CD4-positive, alpha-beta memory T cell (primary cell): ENCODE measurements at regions of chr4 and their contacts with region 1.

Region 1: GRCh38 chr4:1856042-1856788 is at the start of gene LETM1:
- DNase-seq: peak; percentile 90 to 92 (median 91)
- H3K4me3 ChIP-seq: peak within 1 kb of the TSS; percentile 47 to 89
- H3K4me3 Mint-ChIP-seq: peak within 1 kb of the TSS; percentile 81 to 90 (median 85)
- H3K27ac ChIP-seq: peak within 1 kb of the TSS; percentile 59
- H3K27ac Mint-ChIP-seq: peak within 1 kb of the TSS; percentile 25 to 84 (median 76)
- H3K4me1 ChIP-seq: peaks cover 44% of the 10 kb centered on the region
- H3K4me1 Mint-ChIP-seq: peaks cover 9 to 42% (median 31%) of the 10 kb centered on the region in 4 donors
- H3K27me3 ChIP-seq: no peaks in the 10 kb centered on the region
- H3K27me3 Mint-ChIP-seq: no peaks in the 10 kb centered on the region
- total RNA-seq, gene LETM1: 38.8 to 42.8 TPM

Region 2: GRCh38 chr4:1512738-1513660 is 343.2 kb before region 1 on chr4:
- CTCF ChIA-PET with region 1: no interaction called
- POLR2A ChIA-PET with region 1: no interaction called
- intact Hi-C with region 1: no loop called
- DNase-seq: peak in 4 of 5 donors; percentile 39 to 63 (median 49)
- H3K4me3 ChIP-seq: no peak overlapping the region
- H3K4me3 Mint-ChIP-seq: peak overlapping the region in 4 of 8 donors; percentile 27 to 63 (median 42)
- H3K27ac ChIP-seq: no peak overlapping the region
- H3K27ac Mint-ChIP-seq: no peak overlapping the region
- H3K4me1 ChIP-seq: peaks cover 3% of the 10 kb centered on the region
- H3K4me1 Mint-ChIP-seq: no peaks in the 10 kb centered on the region
- H3K27me3 ChIP-seq: peaks cover 5% of the 10 kb centered on the region
- H3K27me3 Mint-ChIP-seq: peaks cover 3 to 8% of the 10 kb centered on the region in 2 donors

Region 3: DNA sequence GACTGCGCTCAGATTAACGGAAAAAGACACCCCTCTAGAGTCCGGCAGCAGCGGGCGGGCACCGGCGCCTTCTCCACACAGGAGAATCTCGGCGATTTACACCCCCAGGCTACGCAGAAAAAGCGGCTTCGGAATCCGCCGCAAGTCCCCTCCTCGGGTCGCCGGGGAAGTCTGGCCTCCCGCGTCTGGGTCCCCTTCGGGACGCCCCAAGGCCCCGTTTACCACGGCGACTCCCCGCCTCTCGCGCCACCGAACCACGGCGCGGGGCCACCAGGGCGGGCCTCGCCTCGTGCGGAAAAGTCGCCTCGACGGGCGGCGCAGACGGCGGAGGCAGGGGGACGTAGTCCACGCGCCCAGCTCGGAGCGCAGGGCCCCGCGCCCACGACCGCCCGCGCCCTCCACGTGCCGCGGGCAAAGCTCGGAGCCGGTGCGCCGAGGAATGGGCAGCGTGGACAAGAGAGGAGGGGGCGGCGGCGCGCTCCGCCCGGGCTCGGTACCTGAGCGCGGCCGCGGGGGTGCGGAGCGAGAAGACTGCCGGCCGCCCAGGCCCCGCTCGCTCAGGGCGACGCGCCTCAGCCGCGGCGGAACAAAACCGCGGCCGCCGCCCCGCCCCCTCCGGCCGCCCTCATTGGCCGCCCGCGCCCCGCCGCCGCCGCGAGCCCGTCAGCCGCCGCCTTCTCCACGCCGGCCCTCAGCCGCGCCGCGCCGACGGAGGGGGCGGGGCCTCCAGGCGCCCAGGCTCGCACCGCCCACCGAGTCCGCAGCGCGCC is 172.3 kb before region 1 on chr4 and contains the start of gene FAM53A:
- CTCF ChIA-PET with region 1: no interaction called
- POLR2A ChIA-PET with region 1: no interaction called
- intact Hi-C with region 1: loop called (anchors 1 kb)
- DNase-seq: peak; percentile 57 to 92 (median 90)
- H3K4me3 ChIP-seq: peak within 1 kb of the TSS; percentile 52 to 58
- H3K4me3 Mint-ChIP-seq: peak within 1 kb of the TSS; percentile 88 to 93 (median 91)
- H3K27ac ChIP-seq: peak within 1 kb of the TSS; percentile 52
- H3K27ac Mint-ChIP-seq: peak within 1 kb of the TSS; percentile 89 to 96 (median 95)
- H3K4me1 ChIP-seq: peaks cover 7% of the 10 kb centered on the region
- H3K4me1 Mint-ChIP-seq: peaks cover 9 to 16% (median 11%) of the 10 kb centered on the region in 4 donors
- H3K27me3 ChIP-seq: no peaks in the 10 kb centered on the region
- H3K27me3 Mint-ChIP-seq: no peaks in the 10 kb centered on the region
- total RNA-seq, gene FAM53A: 0.89 to 2.2 TPM

Region 4: GRCh38 chr4:1870578-1871443 is 14.6 kb after region 1 on chr4 and contains the start of gene NSD2:
- CTCF ChIA-PET with region 1: interaction called, 4 read pairs
- POLR2A ChIA-PET with region 1: interaction called, 81 read pairs
- intact Hi-C with region 1: loop called (anchors 1 kb)
- DNase-seq: peak; percentile 84 to 89 (median 88)
- H3K4me3 ChIP-seq: peak within 1 kb of the TSS; percentile 47 to 84
- H3K4me3 Mint-ChIP-seq: peak within 1 kb of the TSS; percentile 86 to 97 (median 89)
- H3K27ac ChIP-seq: peak within 1 kb of the TSS; percentile 91
- H3K27ac Mint-ChIP-seq: peak within 1 kb of the TSS; percentile 95 to 99 (median 98)
- H3K4me1 ChIP-seq: peaks cover 36% of the 10 kb centered on the region
- H3K4me1 Mint-ChIP-seq: peaks cover 21 to 39% (median 32%) of the 10 kb centered on the region in 4 donors
- H3K27me3 ChIP-seq: no peaks in the 10 kb centered on the region
- H3K27me3 Mint-ChIP-seq: peaks cover 0 to 3% of the 10 kb centered on the region in 2 donors
- total RNA-seq, gene NSD2: 54.8 to 57.4 TPM